ENCODE measurements at regions of chr19 and their contacts with region 1.

Region 1: GRCh38 chr19:55643348-55644176 is at the start of gene ZNF581:
- DNase-seq: peak; percentile 63 to 85 (median 81)
- ATAC-seq: peak; percentile 73
- H3K4me3 ChIP-seq: peak within 1 kb of the TSS; percentile 80
- H3K4me3 Mint-ChIP-seq: peak within 1 kb of the TSS; percentile 87 to 97 (median 94)
- H3K27ac ChIP-seq: peak within 1 kb of the TSS; percentile 80
- H3K27ac Mint-ChIP-seq: peak within 1 kb of the TSS; percentile 91 to 98 (median 96)
- H3K4me1 ChIP-seq: peaks cover 24 to 25% of the 10 kb centered on the region in 2 donors
- H3K4me1 Mint-ChIP-seq: peaks cover 23 to 63% (median 54%) of the 10 kb centered on the region in 7 donors
- H3K27me3 ChIP-seq: no peaks in the 10 kb centered on the region
- H3K27me3 Mint-ChIP-seq: no peaks in the 10 kb centered on the region
- total RNA-seq, gene ZNF581: 27.0 to 35.8 (median 32.1) TPM

Region 2: DNA sequence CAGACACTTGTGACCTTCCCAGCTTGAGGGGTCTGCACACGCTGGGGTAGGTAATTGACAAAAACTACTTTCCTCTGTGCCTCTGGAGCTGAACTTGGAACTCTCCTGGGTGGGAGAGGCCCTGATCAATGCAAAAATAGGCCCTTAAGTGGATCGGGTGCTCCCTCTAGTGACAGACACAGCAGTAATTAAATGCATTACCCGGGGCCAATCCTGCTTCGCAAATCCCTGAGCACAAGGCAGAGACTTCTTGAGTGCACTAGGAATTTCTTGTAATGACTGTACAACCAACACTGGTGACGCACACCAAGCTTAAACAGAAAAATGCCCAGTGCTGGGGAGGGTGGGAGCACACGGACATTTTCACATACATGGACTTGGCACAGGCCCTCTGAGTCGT is 225.4 kb before region 1 on chr19:
- CTCF ChIA-PET with region 1: no interaction called
- POLR2A ChIA-PET with region 1: no interaction called
- intact Hi-C with region 1: no loop called
- DNase-seq: peak in 8 of 9 donors; percentile 34 to 72 (median 58)
- ATAC-seq: peak; percentile 82
- H3K4me3 ChIP-seq: no peak overlapping the region
- H3K4me3 Mint-ChIP-seq: peak overlapping the region in 2 of 10 donors; percentile 30 to 41
- H3K27ac ChIP-seq: no peak overlapping the region
- H3K27ac Mint-ChIP-seq: peak overlapping the region in 4 of 9 donors; percentile 7 to 90 (median 31)
- H3K4me1 ChIP-seq: peaks cover 16 to 29% of the 10 kb centered on the region in 2 donors
- H3K4me1 Mint-ChIP-seq: peaks cover 7 to 36% (median 23%) of the 10 kb centered on the region in 7 donors
- H3K27me3 ChIP-seq: no peaks in the 10 kb centered on the region
- H3K27me3 Mint-ChIP-seq: peaks cover 0 to 24% (median 0%) of the 10 kb centered on the region in 5 donors

Region 3: DNA sequence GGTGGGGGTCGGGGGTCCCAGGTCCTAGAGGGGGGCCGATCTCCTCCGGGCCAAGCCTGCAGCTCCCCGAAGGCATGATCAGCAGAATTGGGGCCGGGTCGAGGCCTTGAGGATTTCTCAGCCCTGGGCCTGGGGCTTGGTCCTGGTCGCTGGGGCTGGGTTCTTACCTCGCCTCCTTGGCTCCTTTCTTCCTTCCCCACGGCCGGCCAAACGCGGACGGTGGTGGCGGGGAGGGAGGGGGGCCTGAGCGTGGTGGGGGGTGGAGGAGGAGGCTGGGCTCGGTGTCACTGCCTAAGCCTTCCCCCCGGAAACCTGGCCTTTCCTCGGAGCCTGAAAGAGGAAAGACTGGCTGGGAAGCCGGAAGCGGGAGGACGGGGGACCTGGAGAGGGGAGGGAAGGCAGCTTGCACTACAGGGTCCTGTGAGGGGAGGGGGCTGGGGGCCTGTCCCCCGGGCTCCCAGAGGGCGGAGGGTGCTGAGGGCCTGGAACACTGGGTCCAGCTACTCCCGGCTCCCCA is 62.9 kb before region 1 on chr19 and contains the start of gene ZNF579:
- CTCF ChIA-PET with region 1: no interaction called
- POLR2A ChIA-PET with region 1: interaction called, 6 read pairs
- intact Hi-C with region 1: loop called in 1 of 2 experiments (anchors 2 kb)
- DNase-seq: peak in 8 of 9 donors; percentile 50 to 82 (median 64)
- ATAC-seq: peak; percentile 86
- H3K4me3 ChIP-seq: peak within 1 kb of the TSS; percentile 82
- H3K4me3 Mint-ChIP-seq: peak within 1 kb of the TSS; percentile 85 to 92 (median 88)
- H3K27ac ChIP-seq: peak within 1 kb of the TSS; percentile 87
- H3K27ac Mint-ChIP-seq: peak within 1 kb of the TSS; percentile 76 to 96 (median 88)
- H3K4me1 ChIP-seq: peaks cover 8 to 16% of the 10 kb centered on the region in 2 donors
- H3K4me1 Mint-ChIP-seq: peaks cover 21 to 35% (median 29%) of the 10 kb centered on the region in 7 donors
- H3K27me3 ChIP-seq: no peaks in the 10 kb centered on the region
- H3K27me3 Mint-ChIP-seq: peaks cover 0 to 16% (median 0%) of the 10 kb centered on the region in 5 donors
- total RNA-seq, gene ZNF579: 6.1 to 11.0 (median 7.8) TPM

Region 4: DNA sequence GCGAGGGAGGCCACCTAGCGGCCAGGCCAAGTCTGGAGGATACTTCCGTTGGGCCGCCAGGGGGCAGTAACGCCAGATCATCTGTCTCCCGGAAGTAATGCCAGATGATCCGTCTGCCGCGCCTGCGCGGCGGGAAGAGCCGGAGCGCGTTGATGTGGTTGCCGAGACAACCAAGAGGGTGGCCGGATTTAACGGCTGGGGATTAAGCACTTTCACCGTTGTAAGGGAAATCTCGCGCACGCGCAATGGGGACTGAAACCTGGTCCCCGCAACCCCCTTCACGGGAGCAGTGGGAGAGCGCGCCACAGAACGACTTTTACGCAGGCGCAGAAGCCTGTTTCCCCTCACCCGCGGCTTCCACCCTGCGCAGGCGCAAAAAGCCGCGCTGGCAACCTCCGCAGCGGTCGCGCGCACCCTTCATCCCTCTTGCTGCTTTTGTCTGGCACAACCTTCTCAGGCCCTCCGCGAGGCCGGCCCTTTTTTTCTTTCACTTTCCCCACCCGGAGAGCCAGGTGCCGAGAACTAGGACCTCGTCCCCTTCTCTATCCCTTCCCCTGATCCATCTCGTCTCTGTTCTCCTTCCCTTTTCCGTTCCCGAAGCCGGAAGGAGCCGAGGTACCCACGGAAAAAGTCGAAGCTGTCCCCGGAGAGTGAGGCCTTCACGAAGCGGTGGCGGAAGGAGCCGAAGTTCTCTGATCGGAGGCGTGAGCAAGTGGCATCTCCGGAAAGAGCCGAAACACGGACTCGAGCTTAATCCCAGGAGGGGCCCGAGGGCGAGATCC is 10.4 kb after region 1 on chr19:
- CTCF ChIA-PET with region 1: interaction called, 6 read pairs
- POLR2A ChIA-PET with region 1: interaction called, 154 read pairs
- intact Hi-C with region 1: loop called (anchors 1 kb)
- DNase-seq: peak; percentile 95 to 100 (median 100)
- ATAC-seq: peak; percentile 83
- H3K4me3 ChIP-seq: peak overlapping the region; percentile 98
- H3K4me3 Mint-ChIP-seq: peak overlapping the region; percentile 83 to 99 (median 96)
- H3K27ac ChIP-seq: peak overlapping the region; percentile 99
- H3K27ac Mint-ChIP-seq: peak overlapping the region; percentile 95 to 100 (median 99)
- H3K4me1 ChIP-seq: peaks cover 30 to 36% of the 10 kb centered on the region in 2 donors
- H3K4me1 Mint-ChIP-seq: peaks cover 29 to 55% (median 39%) of the 10 kb centered on the region in 7 donors
- H3K27me3 ChIP-seq: no peaks in the 10 kb centered on the region
- H3K27me3 Mint-ChIP-seq: peaks cover 0 to 2% (median 0%) of the 10 kb centered on the region in 5 donors